ENCODE measurements at regions of chr6 and their contacts with region 1.

Region 1: DNA sequence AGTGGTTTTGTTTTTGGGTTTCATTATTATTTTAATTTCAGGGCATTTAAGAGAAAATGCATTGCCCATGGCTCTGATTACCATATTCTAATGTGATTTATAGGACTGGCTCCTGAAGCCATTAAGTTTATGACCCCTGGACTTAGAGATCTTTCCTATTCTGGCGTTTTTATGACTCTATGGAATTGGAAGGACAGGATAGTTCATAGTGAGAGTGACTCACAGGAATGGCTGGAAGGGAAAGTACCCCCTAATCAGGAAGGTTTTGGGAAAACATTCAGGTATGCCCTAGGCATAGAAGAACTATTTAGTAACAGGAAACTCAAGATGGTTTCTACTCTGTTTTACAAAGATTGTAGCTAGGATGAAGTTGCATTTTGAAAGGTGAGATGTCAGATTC is 108.6 kb upstream of the SLC2A12 start:
- DNase-seq: no peak
- H3K4me3 ChIP-seq: no peak overlapping the region
- H3K4me3 Mint-ChIP-seq: no peak overlapping the region
- H3K27ac ChIP-seq: no peak overlapping the region
- H3K27ac Mint-ChIP-seq: no peak overlapping the region
- H3K4me1 ChIP-seq: no peaks in the 10 kb centered on the region
- H3K4me1 Mint-ChIP-seq: no peaks in the 10 kb centered on the region
- H3K27me3 ChIP-seq: no peaks in the 10 kb centered on the region
- H3K27me3 Mint-ChIP-seq: no peaks in the 10 kb centered on the region

Region 2: GRCh38 chr6:133368664-133369063 is 792.4 kb before region 1 on chr6:
- CTCF ChIA-PET with region 1: no interaction called
- POLR2A ChIA-PET with region 1: no interaction called
- intact Hi-C with region 1: no loop called
- DNase-seq: no peak
- H3K4me3 ChIP-seq: no peak overlapping the region
- H3K4me3 Mint-ChIP-seq: no peak overlapping the region
- H3K27ac ChIP-seq: no peak overlapping the region
- H3K27ac Mint-ChIP-seq: no peak overlapping the region
- H3K4me1 ChIP-seq: no peaks in the 10 kb centered on the region
- H3K4me1 Mint-ChIP-seq: no peaks in the 10 kb centered on the region
- H3K27me3 ChIP-seq: no peaks in the 10 kb centered on the region
- H3K27me3 Mint-ChIP-seq: no peaks in the 10 kb centered on the region

Region 3: GRCh38 chr6:134145786-134146185 is 15.2 kb before region 1 on chr6:
- CTCF ChIA-PET with region 1: interaction called, 16 read pairs
- POLR2A ChIA-PET with region 1: no interaction called
- intact Hi-C with region 1: no loop called
- DNase-seq: no peak
- H3K4me3 ChIP-seq: no peak overlapping the region
- H3K4me3 Mint-ChIP-seq: no peak overlapping the region
- H3K27ac ChIP-seq: no peak overlapping the region
- H3K27ac Mint-ChIP-seq: no peak overlapping the region
- H3K4me1 ChIP-seq: no peaks in the 10 kb centered on the region
- H3K4me1 Mint-ChIP-seq: no peaks in the 10 kb centered on the region
- H3K27me3 ChIP-seq: no peaks in the 10 kb centered on the region
- H3K27me3 Mint-ChIP-seq: peaks cover 0 to 4% of the 10 kb centered on the region in 2 donors

Region 4: DNA sequence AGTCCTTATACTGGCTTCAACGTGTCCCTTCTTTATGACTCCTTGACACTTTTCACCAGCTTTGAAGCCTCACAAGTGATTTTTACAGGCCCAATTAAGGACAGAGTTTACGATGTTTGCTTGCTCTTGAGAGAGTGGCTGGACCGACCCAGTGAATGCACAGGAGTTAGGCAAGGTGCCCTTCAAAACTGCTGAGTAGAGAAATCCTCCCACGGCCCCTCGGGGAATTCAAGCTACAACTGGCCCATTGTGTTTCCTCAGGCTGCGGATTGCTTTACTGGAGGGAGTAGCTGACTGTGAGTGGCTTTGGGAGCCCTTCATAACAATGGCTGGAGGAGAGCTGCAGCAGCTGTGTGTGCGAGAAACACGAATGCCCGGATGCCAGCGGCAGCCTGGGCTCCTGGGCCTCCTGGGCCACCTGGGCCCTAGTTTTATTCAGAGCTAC is 106.9 kb after region 1 on chr6:
- CTCF ChIA-PET with region 1: no interaction called
- POLR2A ChIA-PET with region 1: no interaction called
- intact Hi-C with region 1: no loop called
- DNase-seq: no peak
- H3K4me3 ChIP-seq: no peak overlapping the region
- H3K4me3 Mint-ChIP-seq: no peak overlapping the region
- H3K27ac ChIP-seq: no peak overlapping the region
- H3K27ac Mint-ChIP-seq: no peak overlapping the region
- H3K4me1 ChIP-seq: peaks cover 16% of the 10 kb centered on the region
- H3K4me1 Mint-ChIP-seq: peaks cover 11 to 14% (median 13%) of the 10 kb centered on the region in 4 donors
- H3K27me3 ChIP-seq: no peaks in the 10 kb centered on the region
- H3K27me3 Mint-ChIP-seq: no peaks in the 10 kb centered on the region

Region 5: DNA sequence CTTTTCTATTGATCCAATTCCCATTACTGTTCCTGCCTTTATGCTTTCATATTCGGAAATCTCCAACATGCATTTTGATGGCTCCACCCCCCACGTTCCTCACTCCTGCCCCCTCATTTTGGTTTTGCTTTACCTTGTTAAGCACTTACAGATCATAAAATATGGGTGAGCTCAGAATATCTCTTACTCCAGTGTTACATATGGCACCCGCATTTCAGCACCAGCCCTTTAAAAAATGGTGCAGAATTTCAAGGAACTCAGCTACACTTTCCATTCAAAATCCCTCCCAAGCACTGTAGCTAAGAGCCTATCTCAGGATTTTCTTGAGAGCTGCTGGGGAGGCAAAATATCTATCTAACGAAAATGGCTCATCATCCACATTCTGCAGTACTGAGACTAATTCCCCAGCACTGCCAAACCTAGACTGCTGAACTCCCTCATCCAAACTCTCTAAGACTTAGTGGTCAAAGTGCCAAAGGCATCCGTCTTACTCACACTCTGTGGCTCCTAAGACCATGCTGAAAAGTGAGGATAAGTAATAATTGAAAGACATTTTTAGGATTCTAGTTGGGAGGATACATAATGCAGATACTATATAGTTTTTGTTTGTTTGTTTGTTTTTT is 149.1 kb after region 1 on chr6:
- CTCF ChIA-PET with region 1: no interaction called
- POLR2A ChIA-PET with region 1: no interaction called
- intact Hi-C with region 1: no loop called
- DNase-seq: no peak
- H3K4me3 ChIP-seq: no peak overlapping the region
- H3K4me3 Mint-ChIP-seq: no peak overlapping the region
- H3K27ac ChIP-seq: no peak overlapping the region
- H3K27ac Mint-ChIP-seq: peak overlapping the region in 2 of 7 donors; percentile 11 to 16
- H3K4me1 ChIP-seq: no peaks in the 10 kb centered on the region
- H3K4me1 Mint-ChIP-seq: peaks cover 0 to 13% (median 8%) of the 10 kb centered on the region in 4 donors
- H3K27me3 ChIP-seq: no peaks in the 10 kb centered on the region
- H3K27me3 Mint-ChIP-seq: peaks cover 0 to 5% of the 10 kb centered on the region in 2 donors

Region 6: GRCh38 chr6:134822920-134823709 is 662.1 kb after region 1 on chr6:
- CTCF ChIA-PET with region 1: interaction called, 38 read pairs
- POLR2A ChIA-PET with region 1: no interaction called
- intact Hi-C with region 1: loop called (anchors 1 kb)
- DNase-seq: peak in 4 of 5 donors; percentile 46 to 54 (median 51)
- H3K4me3 ChIP-seq: no peak overlapping the region
- H3K4me3 Mint-ChIP-seq: no peak overlapping the region
- H3K27ac ChIP-seq: no peak overlapping the region
- H3K27ac Mint-ChIP-seq: no peak overlapping the region
- H3K4me1 ChIP-seq: no peaks in the 10 kb centered on the region
- H3K4me1 Mint-ChIP-seq: peaks cover 0 to 3% (median 0%) of the 10 kb centered on the region in 4 donors
- H3K27me3 ChIP-seq: no peaks in the 10 kb centered on the region
- H3K27me3 Mint-ChIP-seq: peaks cover 3 to 7% of the 10 kb centered on the region in 2 donors

Region 7: GRCh38 chr6:134882426-134883038 is 721.5 kb after region 1 on chr6:
- CTCF ChIA-PET with region 1: interaction called, 4 read pairs
- POLR2A ChIA-PET with region 1: no interaction called
- intact Hi-C with region 1: loop called (anchors 1 kb)
- DNase-seq: peak; percentile 22 to 49 (median 45)
- H3K4me3 ChIP-seq: no peak overlapping the region
- H3K4me3 Mint-ChIP-seq: no peak overlapping the region
- H3K27ac ChIP-seq: no peak overlapping the region
- H3K27ac Mint-ChIP-seq: no peak overlapping the region
- H3K4me1 ChIP-seq: no peaks in the 10 kb centered on the region
- H3K4me1 Mint-ChIP-seq: no peaks in the 10 kb centered on the region
- H3K27me3 ChIP-seq: no peaks in the 10 kb centered on the region
- H3K27me3 Mint-ChIP-seq: peaks cover 14 to 18% of the 10 kb centered on the region in 2 donors

Region 8: GRCh38 chr6:135423649-135424128 is 1262.7 kb after region 1 on chr6:
- CTCF ChIA-PET with region 1: no interaction called
- POLR2A ChIA-PET with region 1: no interaction called
- intact Hi-C with region 1: loop called (anchors 5 kb)
- DNase-seq: peak in 4 of 5 donors; percentile 13 to 24 (median 21)
- H3K4me3 ChIP-seq: no peak overlapping the region
- H3K4me3 Mint-ChIP-seq: no peak overlapping the region
- H3K27ac ChIP-seq: no peak overlapping the region
- H3K27ac Mint-ChIP-seq: no peak overlapping the region
- H3K4me1 ChIP-seq: no peaks in the 10 kb centered on the region
- H3K4me1 Mint-ChIP-seq: no peaks in the 10 kb centered on the region
- H3K27me3 ChIP-seq: no peaks in the 10 kb centered on the region
- H3K27me3 Mint-ChIP-seq: no peaks in the 10 kb centered on the region